Activated CD4-positive, alpha-beta memory T cell treated with anti-CD3 and anti-CD28 coated beads for 36 hours (primary cell): ENCODE measurements at regions of chr12 and their contacts with region 1.

Region 1: DNA sequence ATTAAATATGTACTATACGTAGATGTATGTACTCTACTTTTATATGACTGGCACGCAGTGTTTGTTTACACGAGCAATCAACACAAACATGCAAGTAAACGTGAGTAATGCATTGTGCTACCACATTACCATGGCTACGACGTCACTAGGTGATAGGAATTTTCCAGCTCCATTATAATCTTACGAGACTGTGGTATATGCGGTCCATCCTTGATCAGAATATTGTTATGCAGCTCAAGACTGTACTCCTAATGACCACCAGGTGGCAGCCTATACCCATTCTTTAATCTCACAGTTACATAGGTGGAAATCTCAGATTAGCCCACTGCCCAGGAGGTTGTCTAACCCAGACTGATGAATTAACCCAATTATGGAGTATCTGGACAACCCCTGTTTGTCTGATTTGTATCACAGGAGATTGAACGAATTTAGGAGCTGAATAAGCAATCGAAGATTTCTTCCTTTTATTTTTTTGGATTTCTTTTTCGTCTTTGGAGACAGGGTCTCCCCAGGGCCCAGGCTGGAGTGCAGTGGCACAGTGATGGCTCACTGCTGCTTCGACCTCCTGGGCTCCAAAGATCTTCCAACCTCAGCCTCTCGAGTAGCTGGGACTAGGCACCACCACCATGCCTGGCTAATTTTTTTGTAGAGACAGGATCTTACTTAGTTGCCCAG is 8.7 kb upstream of the TESPA1 start:
- DNase-seq: peak; percentile 57
- H3K4me3 Mint-ChIP-seq: no peak overlapping the region
- H3K27ac Mint-ChIP-seq: no peak overlapping the region
- H3K4me1 Mint-ChIP-seq: peaks cover 43% of the 10 kb centered on the region
- H3K27me3 Mint-ChIP-seq: no peaks in the 10 kb centered on the region

Region 2: GRCh38 chr12:53500776-53501614 is 1492.3 kb before region 1 on chr12 and contains the start of gene TARBP2:
- CTCF ChIA-PET with region 1: no interaction called
- POLR2A ChIA-PET with region 1: no interaction called
- intact Hi-C with region 1: no loop called
- DNase-seq: peak; percentile 96
- H3K4me3 Mint-ChIP-seq: peak within 1 kb of the TSS; percentile 84
- H3K27ac Mint-ChIP-seq: peak within 1 kb of the TSS; percentile 93
- H3K4me1 Mint-ChIP-seq: peaks cover 39% of the 10 kb centered on the region
- H3K27me3 Mint-ChIP-seq: no peaks in the 10 kb centered on the region
- total RNA-seq, gene TARBP2: 27.5 to 29.7 TPM

Region 3: DNA sequence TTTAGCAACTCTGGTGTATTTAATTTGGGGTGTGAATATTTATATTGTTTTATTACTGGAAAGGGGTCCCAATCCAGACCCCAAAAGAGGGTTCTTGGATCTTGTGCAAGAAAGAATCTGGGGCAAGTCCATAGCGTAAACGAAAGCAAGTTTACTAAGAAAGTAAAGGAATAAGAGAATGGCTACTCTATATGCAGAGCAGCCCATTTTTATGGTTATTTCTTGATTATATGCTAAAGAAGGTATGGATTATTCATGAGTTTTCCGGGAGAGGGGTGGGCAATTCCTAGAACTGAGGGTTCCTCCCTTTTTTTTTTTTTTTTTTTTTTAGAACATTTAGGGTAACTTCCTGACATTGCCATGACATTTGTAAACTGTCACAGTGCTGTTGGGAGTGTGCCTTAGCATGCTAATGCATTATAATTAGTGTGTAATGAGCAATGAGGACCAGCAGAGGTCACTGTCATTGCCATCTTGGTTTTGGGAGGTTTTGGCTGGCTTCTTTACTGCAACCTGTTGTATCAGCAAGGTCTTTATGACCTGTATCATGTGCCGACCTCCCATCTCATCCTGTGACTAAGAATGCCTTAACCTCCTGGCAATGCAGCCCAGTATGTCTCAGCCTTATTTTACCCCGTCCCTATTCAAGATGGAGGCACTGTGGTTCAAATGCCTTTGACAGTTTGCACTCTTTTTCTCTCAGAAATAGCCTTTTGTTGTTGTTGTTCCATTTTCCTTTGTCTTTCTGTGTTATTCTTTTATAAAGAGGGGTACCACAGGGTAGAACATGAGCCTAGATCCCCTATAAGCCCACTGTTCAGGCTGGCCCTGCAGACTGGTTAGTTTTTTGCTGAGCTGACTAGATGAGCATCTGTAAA is 269.7 kb before region 1 on chr12:
- CTCF ChIA-PET with region 1: interaction called, 14 read pairs
- POLR2A ChIA-PET with region 1: no interaction called
- intact Hi-C with region 1: no loop called
- DNase-seq: peak; percentile 32
- H3K4me3 Mint-ChIP-seq: no peak overlapping the region
- H3K27ac Mint-ChIP-seq: no peak overlapping the region
- H3K4me1 Mint-ChIP-seq: peaks cover 13% of the 10 kb centered on the region
- H3K27me3 Mint-ChIP-seq: peaks cover 2% of the 10 kb centered on the region

Region 4: GRCh38 chr12:54853995-54854566 is 139.2 kb before region 1 on chr12 and contains the start of gene MUCL1:
- CTCF ChIA-PET with region 1: interaction called, 23 read pairs
- POLR2A ChIA-PET with region 1: no interaction called
- intact Hi-C with region 1: loop called (anchors 1 kb)
- DNase-seq: peak; percentile 80
- H3K4me3 Mint-ChIP-seq: no peak within 1 kb of the TSS
- H3K27ac Mint-ChIP-seq: no peak within 1 kb of the TSS
- H3K4me1 Mint-ChIP-seq: peaks cover 17% of the 10 kb centered on the region
- H3K27me3 Mint-ChIP-seq: peaks cover 2% of the 10 kb centered on the region
- total RNA-seq, gene MUCL1: not detected

Region 5: DNA sequence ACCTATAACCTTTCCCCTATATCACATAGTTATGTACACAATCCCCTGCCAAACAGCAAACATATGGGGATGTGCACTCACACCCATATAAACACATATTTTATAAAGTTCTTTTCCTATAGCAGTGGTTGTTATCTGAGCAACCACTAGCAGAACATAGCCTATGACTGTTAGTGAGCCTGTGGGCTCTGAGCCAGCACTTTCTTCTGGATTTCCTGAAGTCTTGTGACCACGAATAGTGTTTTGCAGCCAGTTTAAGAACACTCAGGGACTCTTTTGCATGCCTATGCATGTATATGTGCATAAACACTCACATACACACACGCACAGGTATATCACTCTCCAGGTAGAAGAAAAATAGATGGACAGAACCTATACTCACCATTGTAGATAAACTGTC is 25.8 kb before region 1 on chr12:
- CTCF ChIA-PET with region 1: interaction called, 55 read pairs
- POLR2A ChIA-PET with region 1: no interaction called
- intact Hi-C with region 1: no loop called
- DNase-seq: peak; percentile 24
- H3K4me3 Mint-ChIP-seq: no peak overlapping the region
- H3K27ac Mint-ChIP-seq: peak overlapping the region; percentile 60
- H3K4me1 Mint-ChIP-seq: peaks cover 73% of the 10 kb centered on the region
- H3K27me3 Mint-ChIP-seq: no peaks in the 10 kb centered on the region

Region 6: DNA sequence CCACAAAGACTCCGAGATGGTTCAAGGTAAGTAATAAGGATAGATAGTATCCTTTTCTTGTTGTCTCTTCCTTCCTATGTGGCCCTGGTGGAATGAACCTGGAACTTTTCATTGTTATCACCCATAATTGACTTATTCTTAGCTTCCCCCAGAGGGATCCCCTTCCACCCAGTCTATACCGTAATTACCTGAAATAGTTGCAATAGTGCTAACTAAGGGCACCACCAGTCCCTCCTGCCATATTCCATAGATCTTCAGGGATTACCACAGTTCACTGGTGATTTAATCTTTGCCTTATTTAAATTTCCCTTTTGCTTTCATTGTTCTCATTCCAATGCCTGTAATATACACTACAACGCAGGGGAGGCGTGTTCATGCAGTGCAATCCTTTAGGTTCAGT is 119.1 kb after region 1 on chr12:
- CTCF ChIA-PET with region 1: no interaction called
- POLR2A ChIA-PET with region 1: no interaction called
- intact Hi-C with region 1: no loop called
- DNase-seq: no peak
- H3K4me3 Mint-ChIP-seq: no peak overlapping the region
- H3K27ac Mint-ChIP-seq: no peak overlapping the region
- H3K4me1 Mint-ChIP-seq: no peaks in the 10 kb centered on the region
- H3K27me3 Mint-ChIP-seq: peaks cover 7% of the 10 kb centered on the region

Region 7: DNA sequence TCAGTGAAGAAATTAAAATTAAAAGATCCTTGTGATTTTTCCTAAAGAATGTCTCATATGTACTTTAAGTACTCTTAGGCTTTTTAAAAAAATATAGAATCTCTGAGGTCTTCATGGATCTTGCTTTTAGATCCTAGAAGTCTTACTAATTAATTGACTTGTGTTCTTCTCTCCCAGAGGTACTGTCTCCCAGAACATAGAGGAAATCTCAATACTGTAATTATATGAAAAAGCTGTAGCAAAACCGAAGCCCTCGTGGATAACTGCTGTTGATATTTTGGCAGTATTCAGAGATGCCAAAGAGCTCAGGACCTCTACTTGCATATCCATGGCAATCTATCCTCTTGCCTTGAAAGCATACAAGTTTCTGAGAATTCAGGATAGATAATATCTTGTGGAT is 132.8 kb after region 1 on chr12 and contains the start of gene OR9K2:
- CTCF ChIA-PET with region 1: no interaction called
- POLR2A ChIA-PET with region 1: no interaction called
- intact Hi-C with region 1: no loop called
- DNase-seq: no peak
- H3K4me3 Mint-ChIP-seq: no peak within 1 kb of the TSS
- H3K27ac Mint-ChIP-seq: no peak within 1 kb of the TSS
- H3K4me1 Mint-ChIP-seq: no peaks in the 10 kb centered on the region
- H3K27me3 Mint-ChIP-seq: peaks cover 34% of the 10 kb centered on the region
- total RNA-seq, gene OR9K2: not detected

Region 8: DNA sequence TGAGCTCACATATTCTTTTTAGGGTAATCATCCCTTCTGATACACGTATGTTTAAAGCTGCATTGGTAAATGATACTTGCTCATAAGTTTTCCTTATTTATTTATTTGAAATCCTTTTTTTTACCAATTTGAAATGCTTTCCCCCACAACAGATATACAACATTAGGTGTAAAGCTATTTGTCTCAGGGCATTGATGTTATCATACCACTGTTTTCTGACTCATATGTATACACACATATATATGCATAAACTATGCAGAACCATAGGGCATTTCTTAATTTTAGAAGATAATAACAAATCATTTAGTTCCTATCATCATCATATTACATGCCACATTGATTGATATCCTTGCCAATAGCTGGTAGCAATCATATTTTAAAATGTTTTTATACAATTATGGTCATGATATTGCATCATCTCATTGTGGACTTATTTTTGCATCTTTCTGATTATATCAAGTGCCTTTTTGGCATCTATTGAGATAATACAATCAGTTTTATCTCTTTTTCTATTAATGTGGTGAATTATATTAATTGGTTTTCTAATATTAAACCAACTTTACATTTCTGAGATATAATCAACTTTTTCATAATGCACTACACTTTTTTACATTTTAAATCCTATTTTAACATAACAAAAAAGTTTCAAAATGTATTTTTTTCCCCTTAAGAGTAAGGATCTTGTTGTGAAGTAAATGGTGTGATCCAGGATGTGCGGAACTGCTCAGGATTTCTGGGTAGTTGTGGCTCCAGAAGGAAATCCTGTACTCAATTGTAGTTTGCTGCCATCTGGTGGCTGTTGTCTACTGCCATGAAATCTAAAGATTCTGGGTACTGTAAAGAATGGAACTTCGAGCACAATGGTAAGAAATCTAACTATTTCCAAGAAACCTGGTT is 149.6 kb after region 1 on chr12:
- CTCF ChIA-PET with region 1: interaction called, 19 read pairs
- POLR2A ChIA-PET with region 1: no interaction called
- intact Hi-C with region 1: loop called (anchors 1 kb)
- DNase-seq: peak; percentile 41
- H3K4me3 Mint-ChIP-seq: no peak overlapping the region
- H3K27ac Mint-ChIP-seq: no peak overlapping the region
- H3K4me1 Mint-ChIP-seq: peaks cover 5% of the 10 kb centered on the region
- H3K27me3 Mint-ChIP-seq: no peaks in the 10 kb centered on the region